ENCODE measurements at regions of chr1 and their contacts with region 1.

Region 1: GRCh38 chr1:204128964-204129896 is 22.6 kb downstream of the ETNK2 start:
- DNase-seq: peak; percentile 48 to 94 (median 68)

Region 2: GRCh38 chr1:203861379-203862184 is 267.6 kb before region 1 on chr1 and contains the start of gene SNRPE:
- intact Hi-C with region 1: loop called (anchors 1 kb)
- DNase-seq: peak; percentile 93 to 99 (median 96)

Region 3: DNA sequence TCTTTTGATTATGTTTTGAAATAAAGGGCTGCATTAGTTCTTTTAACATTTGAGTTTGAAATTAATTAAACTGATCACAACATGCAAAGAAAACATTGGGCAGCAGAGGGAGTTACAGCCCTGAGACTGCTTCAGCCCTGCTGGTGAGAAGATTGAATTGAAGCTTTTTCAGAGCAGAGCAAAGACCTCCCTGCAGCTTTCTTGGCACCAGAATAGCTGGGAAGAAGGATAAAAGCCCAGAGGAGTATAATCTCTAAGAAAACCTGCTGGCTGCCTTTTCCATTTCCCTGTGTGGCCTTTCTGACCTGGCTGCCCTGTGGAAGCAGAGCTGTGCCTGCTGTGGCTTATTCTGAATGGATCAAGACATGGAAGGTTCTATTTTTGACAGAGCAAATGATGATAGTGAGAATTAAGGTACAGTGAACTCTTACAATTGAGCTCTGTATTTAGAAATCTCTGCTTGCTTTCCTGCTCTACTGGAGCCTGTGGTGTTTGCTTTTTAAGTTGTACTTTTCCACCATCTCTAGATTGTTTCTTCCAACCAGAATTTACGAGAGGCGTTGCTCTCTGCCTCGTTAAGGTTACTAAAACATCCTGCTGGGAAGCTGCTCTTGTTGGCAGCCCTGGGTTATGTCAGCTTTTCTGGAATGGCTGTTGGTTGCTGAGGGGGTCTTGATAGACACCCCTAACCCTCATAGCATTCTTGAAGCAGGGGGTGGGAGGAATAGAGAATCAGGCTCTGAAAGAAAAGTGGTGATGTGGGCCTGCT is 257.9 kb before region 1 on chr1:
- intact Hi-C with region 1: loop called (anchors 1 kb)
- DNase-seq: peak in 5 of 10 donors; percentile 17 to 85 (median 52)

Region 4: GRCh38 chr1:203996126-203996525 is 133.1 kb before region 1 on chr1:
- intact Hi-C with region 1: loop called (anchors 5 kb)
- DNase-seq: peak in 9 of 10 donors; percentile 15 to 88 (median 37)

Region 5: DNA sequence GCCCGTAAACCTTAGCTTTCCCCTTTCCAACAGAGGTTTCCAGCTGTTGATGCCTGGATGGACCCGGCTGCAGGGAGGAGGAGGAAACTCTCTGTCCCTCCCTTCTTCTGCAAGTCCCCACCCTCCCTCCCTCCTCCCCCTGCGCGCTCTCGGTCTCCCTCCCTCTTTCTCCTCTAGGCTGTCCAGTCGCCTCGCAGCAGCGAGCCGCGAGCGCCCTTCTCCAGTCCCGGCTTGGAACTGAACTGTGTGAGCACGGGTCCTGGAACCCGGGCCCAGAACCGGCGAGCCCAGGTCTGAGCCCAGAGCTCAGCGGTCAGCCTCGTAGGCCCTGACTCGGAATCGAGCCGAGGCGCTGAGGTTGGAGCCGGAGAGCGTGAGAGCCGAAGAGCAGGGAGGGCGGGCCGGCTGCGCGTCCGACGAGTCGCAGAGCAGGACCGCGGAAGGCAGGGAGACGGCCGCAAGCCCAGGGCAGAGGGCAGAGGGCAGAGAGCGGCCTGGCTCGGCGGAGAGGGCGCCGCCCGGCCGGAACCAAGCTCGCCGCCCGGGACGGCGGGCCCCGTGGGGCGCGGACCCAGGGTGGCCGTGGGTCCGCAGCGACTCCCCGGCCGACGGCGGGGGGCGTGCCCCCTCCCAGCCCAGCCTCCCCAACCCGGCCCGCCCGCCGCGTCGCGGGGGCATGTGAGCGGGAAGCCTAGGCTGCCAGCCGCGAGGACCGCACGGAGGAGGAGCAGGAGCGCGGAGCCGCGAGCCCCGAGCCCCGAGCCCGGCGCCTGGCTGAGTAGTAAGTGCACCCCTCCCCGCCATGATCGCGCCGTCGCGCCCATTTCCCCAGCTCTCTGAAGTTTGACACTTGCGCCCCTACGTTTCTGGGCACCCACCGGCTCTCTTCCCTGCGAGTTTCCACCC is 56.0 kb before region 1 on chr1 and contains the start of gene SOX13:
- intact Hi-C with region 1: loop called (anchors 5 kb)
- DNase-seq: peak; percentile 79 to 98 (median 86)